CD4-positive, alpha-beta T cell (primary cell): ENCODE measurements at regions of chr13 and their contacts with region 1.

Region 1: GRCh38 chr13:42048682-42049453 is 420 bp downstream of the DGKH start:
- DNase-seq: peak in 13 of 14 experiments; percentile 32 to 78 (median 51)
- ATAC-seq: peak; percentile 59
- H3K4me3 ChIP-seq: peak overlapping the region; percentile 82
- H3K4me3 Mint-ChIP-seq: peak overlapping the region; percentile 89
- H3K27ac ChIP-seq: no peak overlapping the region
- H3K27ac Mint-ChIP-seq: no peak overlapping the region
- H3K4me1 ChIP-seq: peaks cover 17% of the 10 kb centered on the region
- H3K4me1 Mint-ChIP-seq: peaks cover 29% of the 10 kb centered on the region
- H3K27me3 ChIP-seq: no peaks in the 10 kb centered on the region
- H3K27me3 Mint-ChIP-seq: no peaks in the 10 kb centered on the region
- CTCF ChIP-seq: no peak

Region 2: DNA sequence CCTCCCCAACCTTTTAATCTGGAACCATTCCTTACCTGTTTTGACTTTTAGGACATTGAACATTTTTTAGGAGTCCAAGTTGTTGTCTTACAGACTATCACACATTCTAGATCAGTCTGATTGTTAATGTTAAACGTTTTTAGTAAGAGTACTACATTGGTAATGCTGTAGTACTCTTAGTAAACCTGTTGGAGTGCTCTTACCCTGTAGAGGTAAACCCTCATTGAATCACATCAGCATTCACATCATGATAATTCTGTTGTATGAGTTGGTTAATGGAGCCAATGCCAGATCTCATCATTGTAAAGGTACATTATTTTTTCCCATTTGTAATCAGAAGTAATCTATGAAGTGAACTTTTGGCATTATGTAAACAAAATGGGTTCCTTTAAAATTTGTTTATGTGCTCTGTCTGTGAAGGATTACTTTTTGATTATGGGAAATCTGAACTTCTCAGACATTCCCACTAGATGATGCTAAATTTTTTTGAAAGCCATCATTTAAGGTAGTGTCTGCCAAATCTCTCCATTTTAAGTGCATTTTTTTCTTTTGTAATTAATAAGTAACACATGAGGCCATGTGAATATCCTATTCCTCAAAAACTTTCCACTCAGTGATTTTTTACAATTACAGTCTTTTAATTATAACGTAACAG is 143.1 kb before region 1 on chr13:
- CTCF ChIA-PET with region 1: no interaction called
- POLR2A ChIA-PET with region 1: interaction called, 4 read pairs
- intact Hi-C with region 1: loop called in 1 of 2 experiments (anchors 2 kb)
- DNase-seq: peak in 3 of 14 experiments; percentile 49 to 60 (median 53)
- ATAC-seq: peak; percentile 99
- H3K4me3 ChIP-seq: no peak overlapping the region
- H3K4me3 Mint-ChIP-seq: no peak overlapping the region
- H3K27ac ChIP-seq: no peak overlapping the region
- H3K27ac Mint-ChIP-seq: no peak overlapping the region
- H3K4me1 ChIP-seq: no peaks in the 10 kb centered on the region
- H3K4me1 Mint-ChIP-seq: peaks cover 3% of the 10 kb centered on the region
- H3K27me3 ChIP-seq: no peaks in the 10 kb centered on the region
- H3K27me3 Mint-ChIP-seq: no peaks in the 10 kb centered on the region
- CTCF ChIP-seq: peak; percentile 70

Region 3: GRCh38 chr13:42337796-42338195 is 288.9 kb after region 1 on chr13:
- CTCF ChIA-PET with region 1: no interaction called
- POLR2A ChIA-PET with region 1: no interaction called
- intact Hi-C with region 1: no loop called
- DNase-seq: no peak
- ATAC-seq: no peak
- H3K4me3 ChIP-seq: no peak overlapping the region
- H3K4me3 Mint-ChIP-seq: no peak overlapping the region
- H3K27ac ChIP-seq: no peak overlapping the region
- H3K27ac Mint-ChIP-seq: no peak overlapping the region
- H3K4me1 ChIP-seq: peaks cover 6% of the 10 kb centered on the region
- H3K4me1 Mint-ChIP-seq: peaks cover 5% of the 10 kb centered on the region
- H3K27me3 ChIP-seq: no peaks in the 10 kb centered on the region
- H3K27me3 Mint-ChIP-seq: no peaks in the 10 kb centered on the region
- CTCF ChIP-seq: no peak